ENCODE measurements at regions of chr1 and their contacts with region 1.

Region 1: GRCh38 chr1:156838981-156839410 is 19.9 kb downstream of the INSRR start:
- DNase-seq: peak in 1 of 2 experiments; percentile 86
- H3K4me3 ChIP-seq: no peak overlapping the region
- H3K27ac ChIP-seq: no peak overlapping the region
- H3K4me1 ChIP-seq: peaks cover 0 to 2% (median 2%) of the 10 kb centered on the region in 4 experiments; a peak in 3 of 7 replicates
- H3K27me3 ChIP-seq: peaks cover 9 to 23% (median 22%) of the 10 kb centered on the region in 4 experiments
- CTCF ChIP-seq: peak; percentile 92 to 94 (median 93)
- EP300 ChIP-seq: no peak
- POLR2A ChIP-seq: no peak
- RAD21 ChIP-seq: peak; percentile 90 to 94

Region 2: GRCh38 chr1:156781585-156782186 is 57.3 kb before region 1 on chr1:
- CTCF ChIA-PET with region 1: interaction called, 10 read pairs
- POLR2A ChIA-PET with region 1: no interaction called
- DNase-seq: no peak
- H3K4me3 ChIP-seq: no peak overlapping the region
- H3K27ac ChIP-seq: no peak overlapping the region
- H3K4me1 ChIP-seq: no peaks in the 10 kb centered on the region
- H3K27me3 ChIP-seq: no peaks in the 10 kb centered on the region
- CTCF ChIP-seq: no peak
- EP300 ChIP-seq: no peak
- POLR2A ChIP-seq: no peak
- RAD21 ChIP-seq: no peak

Region 3: GRCh38 chr1:156821801-156822200 is 17.2 kb before region 1 on chr1:
- CTCF ChIA-PET with region 1: interaction called, 556 read pairs
- POLR2A ChIA-PET with region 1: interaction called, 3 read pairs
- DNase-seq: no peak
- H3K4me3 ChIP-seq: no peak overlapping the region
- H3K27ac ChIP-seq: no peak overlapping the region
- H3K4me1 ChIP-seq: no peaks in the 10 kb centered on the region
- H3K27me3 ChIP-seq: peaks cover 1 to 5% (median 3%) of the 10 kb centered on the region in 4 experiments; a peak in 4 of 7 replicates
- CTCF ChIP-seq: no peak
- EP300 ChIP-seq: no peak
- POLR2A ChIP-seq: no peak
- RAD21 ChIP-seq: no peak

Region 4: DNA sequence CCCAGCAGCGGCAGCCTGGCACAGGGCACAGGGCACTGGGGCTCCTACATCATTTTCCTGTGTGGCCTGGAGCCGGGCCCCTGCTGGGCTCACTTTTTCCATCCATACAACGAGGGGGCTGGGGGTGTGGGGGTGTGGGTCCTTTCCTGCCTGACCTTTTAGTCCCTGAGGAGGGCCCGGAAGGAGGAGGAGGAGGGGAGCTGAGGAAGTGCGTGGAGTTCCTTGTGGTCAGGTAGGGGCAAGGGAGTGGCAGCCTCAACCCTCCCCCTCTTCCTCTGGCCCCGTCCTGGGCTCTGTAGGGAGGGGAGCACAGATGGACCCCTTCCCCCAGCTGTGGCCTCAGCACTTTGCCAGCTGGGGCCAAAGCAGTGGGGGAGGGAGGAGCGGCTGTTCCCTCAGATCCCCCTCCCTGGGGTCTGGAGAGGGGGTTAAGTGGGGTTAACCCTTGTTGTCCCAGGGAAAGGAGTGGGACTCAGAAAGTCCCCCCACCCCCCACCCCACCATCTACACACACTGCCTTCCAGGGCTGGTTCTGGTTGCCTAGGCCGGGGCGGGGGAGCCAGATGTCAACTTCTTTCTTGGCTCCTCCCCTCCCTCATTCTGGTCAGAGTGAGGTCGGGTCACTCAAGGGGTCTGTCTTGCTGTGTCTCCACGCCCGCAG is 27.4 kb after region 1 on chr1:
- CTCF ChIA-PET with region 1: interaction called, 719 read pairs
- POLR2A ChIA-PET with region 1: interaction called, 3 read pairs
- DNase-seq: no peak
- H3K4me3 ChIP-seq: no peak overlapping the region
- H3K27ac ChIP-seq: no peak overlapping the region
- H3K4me1 ChIP-seq: peaks cover 0 to 14% (median 8%) of the 10 kb centered on the region in 4 experiments; a peak in 5 of 7 replicates
- H3K27me3 ChIP-seq: peaks cover 21 to 40% (median 33%) of the 10 kb centered on the region in 4 experiments
- CTCF ChIP-seq: no peak
- EP300 ChIP-seq: no peak
- POLR2A ChIP-seq: no peak
- RAD21 ChIP-seq: no peak

Region 5: GRCh38 chr1:156892190-156893047 is 53.4 kb after region 1 on chr1:
- CTCF ChIA-PET with region 1: interaction called, 719 read pairs
- POLR2A ChIA-PET with region 1: interaction called, 3 read pairs
- DNase-seq: peak; percentile 62 to 97
- H3K4me3 ChIP-seq: peak overlapping the region in 2 of 4 experiments; percentile 14 to 55; a peak in 4 of 8 replicates
- H3K27ac ChIP-seq: no peak overlapping the region
- H3K4me1 ChIP-seq: peaks cover 0 to 16% (median 9%) of the 10 kb centered on the region in 4 experiments; a peak in 5 of 7 replicates
- H3K27me3 ChIP-seq: peaks cover 8 to 54% (median 43%) of the 10 kb centered on the region in 4 experiments
- CTCF ChIP-seq: peak; percentile 84 to 93 (median 92)
- EP300 ChIP-seq: no peak
- POLR2A ChIP-seq: no peak
- RAD21 ChIP-seq: peak; percentile 45 to 63

Region 6: GRCh38 chr1:156910309-156910782 is 71.3 kb after region 1 on chr1:
- CTCF ChIA-PET with region 1: interaction called, 21 read pairs
- POLR2A ChIA-PET with region 1: no interaction called
- DNase-seq: peak in 1 of 2 experiments; percentile 93
- H3K4me3 ChIP-seq: peak overlapping the region in 3 of 4 experiments; percentile 45 to 56 (median 49); a peak in 6 of 8 replicates
- H3K27ac ChIP-seq: no peak overlapping the region
- H3K4me1 ChIP-seq: peaks cover 2 to 12% (median 10%) of the 10 kb centered on the region in 4 experiments
- H3K27me3 ChIP-seq: peaks cover 0 to 15% (median 11%) of the 10 kb centered on the region in 4 experiments; a peak in 6 of 7 replicates
- CTCF ChIP-seq: peak in 2 of 3 experiments; percentile 72 to 74; a peak in 3 of 4 replicates
- EP300 ChIP-seq: no peak
- POLR2A ChIP-seq: no peak
- RAD21 ChIP-seq: peak; percentile 34 to 46